ENCODE measurements at regions of chr1 and their contacts with region 1.

Region 1: DNA sequence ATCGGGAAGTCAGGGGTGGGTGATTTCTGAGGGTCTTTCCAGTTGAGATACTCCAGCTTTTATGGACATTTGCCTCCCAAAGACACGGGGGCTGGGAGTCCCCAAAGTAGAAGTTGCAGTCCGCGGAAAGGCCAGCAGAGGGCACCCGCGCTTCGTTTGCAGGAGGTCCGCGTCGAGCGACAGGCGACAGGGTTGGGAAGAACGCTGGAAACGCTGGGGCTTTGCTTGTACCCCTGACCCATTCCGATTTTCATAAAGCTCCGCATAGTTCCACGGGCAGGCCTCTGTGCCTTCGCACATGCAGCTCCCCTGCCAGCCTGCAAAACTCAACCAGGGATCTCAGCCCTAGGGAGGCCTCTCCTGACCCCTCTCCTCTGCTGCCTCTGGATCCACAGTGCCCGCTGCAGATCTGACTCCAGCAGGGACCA is 44.2 kb upstream of the LAPTM5 start:
- DNase-seq: peak; percentile 45 to 51
- ATAC-seq: peak; percentile 69 to 87; a peak in 5 of 6 replicates
- H3K4me3 ChIP-seq: no peak overlapping the region
- H3K27ac ChIP-seq: peak overlapping the region in 1 of 2 experiments; percentile 54; a peak in 2 of 6 replicates
- H3K4me1 ChIP-seq: 0 out of 3 replicates have a peak, but pooled peaks cover 3% of the 10 kb centered on the region
- CTCF ChIP-seq: peak; percentile 84
- EP300 ChIP-seq: no peak
- POLR2A ChIP-seq: no peak
- RAD21 ChIP-seq: peak; percentile 93 to 94

Region 2: GRCh38 chr1:30525971-30526651 is 275.7 kb before region 1 on chr1:
- CTCF ChIA-PET with region 1: no interaction called
- POLR2A ChIA-PET with region 1: no interaction called
- DNase-seq: peak; percentile 32 to 53
- ATAC-seq: peak; percentile 68 to 83; a peak in 4 of 6 replicates
- H3K4me3 ChIP-seq: no peak overlapping the region
- H3K27ac ChIP-seq: peak overlapping the region in 1 of 2 experiments; percentile 69; a peak in 3 of 6 replicates
- H3K4me1 ChIP-seq: peaks cover 17% of the 10 kb centered on the region; the same call in 2 of the 3 replicates
- CTCF ChIP-seq: no peak
- EP300 ChIP-seq: no peak
- POLR2A ChIP-seq: no peak
- RAD21 ChIP-seq: no peak

Region 3: DNA sequence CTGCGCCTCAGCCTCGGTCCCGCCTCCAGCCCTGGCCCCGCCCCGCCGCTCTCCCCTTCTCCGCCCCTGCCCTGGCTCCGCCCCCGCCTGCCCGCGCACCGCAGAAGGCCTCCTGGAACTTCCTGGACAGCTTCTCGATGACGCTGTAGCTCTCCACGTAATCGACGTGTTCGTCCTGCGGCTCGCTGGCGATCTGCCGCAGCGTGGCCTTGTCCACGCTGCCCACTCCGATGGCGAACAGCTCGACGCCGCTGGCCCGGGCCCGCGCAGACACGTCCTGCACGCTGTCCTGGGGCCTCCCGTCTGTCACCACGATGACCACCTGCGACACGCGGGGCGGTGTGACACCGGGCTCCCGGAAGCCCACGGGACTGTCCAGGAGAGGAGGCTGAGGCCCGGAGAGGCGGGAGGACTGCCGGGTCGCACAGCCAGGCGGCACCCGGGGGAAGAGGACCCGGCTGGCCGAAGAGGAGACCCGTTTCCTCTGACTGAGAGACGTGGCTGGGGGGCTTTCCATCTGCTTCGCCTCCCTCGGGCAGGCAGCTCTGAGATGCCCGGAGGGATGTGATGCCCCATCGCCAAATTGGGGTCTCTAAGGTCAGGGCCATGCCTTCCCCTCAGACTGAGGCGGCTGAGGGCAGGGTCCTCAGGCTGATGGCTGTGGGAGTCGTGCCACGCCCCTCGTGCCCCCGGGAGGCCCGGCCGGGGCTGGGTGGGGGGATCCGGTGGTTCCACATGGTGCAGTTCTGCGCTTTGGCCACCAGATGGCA is 83.0 kb before region 1 on chr1:
- CTCF ChIA-PET with region 1: interaction called, 31 read pairs
- POLR2A ChIA-PET with region 1: interaction called, 5 read pairs
- DNase-seq: peak; percentile 66 to 94
- ATAC-seq: peak; percentile 80 to 81
- H3K4me3 ChIP-seq: peak overlapping the region; percentile 62
- H3K27ac ChIP-seq: peak overlapping the region; percentile 92 to 97
- H3K4me1 ChIP-seq: peaks cover 5% of the 10 kb centered on the region; the same call in 2 of the 3 replicates
- CTCF ChIP-seq: peak; percentile 83
- EP300 ChIP-seq: no peak
- POLR2A ChIP-seq: peak; percentile 82
- RAD21 ChIP-seq: peak in 1 of 2 experiments; percentile 89; a peak in 3 of 5 replicates

Region 4: GRCh38 chr1:30790850-30791778 is 10.7 kb before region 1 on chr1:
- CTCF ChIA-PET with region 1: interaction called, 73 read pairs
- POLR2A ChIA-PET with region 1: no interaction called
- DNase-seq: no peak
- ATAC-seq: no peak
- H3K4me3 ChIP-seq: no peak overlapping the region
- H3K27ac ChIP-seq: no peak overlapping the region
- H3K4me1 ChIP-seq: no peaks in the 10 kb centered on the region
- CTCF ChIP-seq: no peak
- EP300 ChIP-seq: no peak
- POLR2A ChIP-seq: no peak
- RAD21 ChIP-seq: no peak

Region 5: GRCh38 chr1:30830537-30830936 is 28.8 kb after region 1 on chr1:
- CTCF ChIA-PET with region 1: interaction called, 32 read pairs
- POLR2A ChIA-PET with region 1: no interaction called
- DNase-seq: no peak
- ATAC-seq: no peak
- H3K4me3 ChIP-seq: no peak overlapping the region
- H3K27ac ChIP-seq: no peak overlapping the region
- H3K4me1 ChIP-seq: no peaks in the 10 kb centered on the region
- CTCF ChIP-seq: no peak
- EP300 ChIP-seq: no peak
- POLR2A ChIP-seq: no peak
- RAD21 ChIP-seq: no peak

Region 6: GRCh38 chr1:30868833-30869435 is 67.1 kb after region 1 on chr1:
- CTCF ChIA-PET with region 1: interaction called, 22 read pairs
- POLR2A ChIA-PET with region 1: no interaction called
- DNase-seq: no peak
- ATAC-seq: no peak
- H3K4me3 ChIP-seq: no peak overlapping the region
- H3K27ac ChIP-seq: no peak overlapping the region
- H3K4me1 ChIP-seq: no peaks in the 10 kb centered on the region
- CTCF ChIP-seq: no peak
- EP300 ChIP-seq: no peak
- POLR2A ChIP-seq: no peak
- RAD21 ChIP-seq: no peak

Region 7: GRCh38 chr1:30911046-30911954 is 109.5 kb after region 1 on chr1:
- CTCF ChIA-PET with region 1: interaction called, 743 read pairs
- POLR2A ChIA-PET with region 1: interaction called, 7 read pairs
- DNase-seq: peak; percentile 74 to 81
- ATAC-seq: peak; percentile 75 to 87
- H3K4me3 ChIP-seq: no peak overlapping the region
- H3K27ac ChIP-seq: no peak overlapping the region
- H3K4me1 ChIP-seq: peaks cover 13% of the 10 kb centered on the region
- CTCF ChIP-seq: peak; percentile 76
- EP300 ChIP-seq: no peak
- POLR2A ChIP-seq: no peak
- RAD21 ChIP-seq: peak; percentile 94 to 97

Region 8: GRCh38 chr1:30940541-30940940 is 138.8 kb after region 1 on chr1:
- CTCF ChIA-PET with region 1: interaction called, 12 read pairs
- POLR2A ChIA-PET with region 1: no interaction called
- DNase-seq: no peak
- ATAC-seq: no peak
- H3K4me3 ChIP-seq: no peak overlapping the region
- H3K27ac ChIP-seq: no peak overlapping the region
- H3K4me1 ChIP-seq: no peaks in the 10 kb centered on the region
- CTCF ChIP-seq: no peak
- EP300 ChIP-seq: no peak
- POLR2A ChIP-seq: no peak
- RAD21 ChIP-seq: no peak

Region 9: DNA sequence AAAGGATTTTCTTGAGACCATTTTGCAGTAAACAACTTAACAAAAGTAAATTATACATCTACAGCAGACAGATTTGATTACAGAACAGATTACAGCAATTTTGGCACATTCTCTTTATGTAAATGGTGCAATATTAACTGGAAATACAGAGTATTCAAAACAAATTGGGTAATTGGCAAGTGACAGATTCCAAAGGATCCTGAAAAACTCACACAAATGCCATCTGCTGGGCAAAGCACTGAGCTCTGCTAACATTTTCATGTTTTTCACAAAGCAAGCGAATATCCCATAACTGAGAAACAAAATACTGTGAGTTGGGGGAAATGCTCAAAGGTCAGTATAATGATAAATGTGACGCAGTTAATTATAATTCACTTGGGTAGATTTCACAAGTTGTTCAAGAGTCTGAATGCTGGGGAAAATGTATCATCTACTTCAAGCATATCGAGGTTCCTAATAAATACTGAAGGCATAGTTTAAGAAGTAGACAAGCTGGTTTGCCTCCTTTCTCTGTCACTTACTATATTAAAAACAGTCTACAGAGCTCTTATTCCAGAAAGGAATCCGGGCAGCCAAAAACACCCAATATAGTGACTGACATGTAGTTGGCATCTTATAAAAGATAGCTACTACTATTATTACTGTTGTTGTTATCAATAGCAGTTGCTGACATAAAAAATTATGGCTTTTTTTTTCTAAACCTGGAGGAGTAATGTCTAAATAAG is 182.5 kb after region 1 on chr1:
- CTCF ChIA-PET with region 1: no interaction called
- POLR2A ChIA-PET with region 1: no interaction called
- DNase-seq: no peak
- ATAC-seq: no peak
- H3K4me3 ChIP-seq: no peak overlapping the region
- H3K27ac ChIP-seq: no peak overlapping the region
- H3K4me1 ChIP-seq: peaks cover 23% of the 10 kb centered on the region
- CTCF ChIP-seq: no peak
- EP300 ChIP-seq: no peak
- POLR2A ChIP-seq: no peak
- RAD21 ChIP-seq: no peak